ENCODE measurements at regions of chr1 and their contacts with region 1.

Region 1: GRCh38 chr1:37514350-37515184 is at the start of gene MEAF6:
- DNase-seq: peak; percentile 63 to 72
- ATAC-seq: peak; percentile 97 to 98
- H3K4me3 ChIP-seq: peak within 1 kb of the TSS; percentile 100
- H3K27ac ChIP-seq: peak within 1 kb of the TSS; percentile 98 to 99
- H3K4me1 ChIP-seq: peaks cover 6% of the 10 kb centered on the region; the same call in 1 of the 3 replicates
- CTCF ChIP-seq: peak; percentile 75
- EP300 ChIP-seq: no peak
- POLR2A ChIP-seq: peak; percentile 78
- RAD21 ChIP-seq: peak in 1 of 2 experiments; percentile 30; a peak in 1 of 5 replicates
- polyA plus RNA-seq, gene MEAF6: 45.4 and 47.2 TPM in 2 replicates

Region 2: DNA sequence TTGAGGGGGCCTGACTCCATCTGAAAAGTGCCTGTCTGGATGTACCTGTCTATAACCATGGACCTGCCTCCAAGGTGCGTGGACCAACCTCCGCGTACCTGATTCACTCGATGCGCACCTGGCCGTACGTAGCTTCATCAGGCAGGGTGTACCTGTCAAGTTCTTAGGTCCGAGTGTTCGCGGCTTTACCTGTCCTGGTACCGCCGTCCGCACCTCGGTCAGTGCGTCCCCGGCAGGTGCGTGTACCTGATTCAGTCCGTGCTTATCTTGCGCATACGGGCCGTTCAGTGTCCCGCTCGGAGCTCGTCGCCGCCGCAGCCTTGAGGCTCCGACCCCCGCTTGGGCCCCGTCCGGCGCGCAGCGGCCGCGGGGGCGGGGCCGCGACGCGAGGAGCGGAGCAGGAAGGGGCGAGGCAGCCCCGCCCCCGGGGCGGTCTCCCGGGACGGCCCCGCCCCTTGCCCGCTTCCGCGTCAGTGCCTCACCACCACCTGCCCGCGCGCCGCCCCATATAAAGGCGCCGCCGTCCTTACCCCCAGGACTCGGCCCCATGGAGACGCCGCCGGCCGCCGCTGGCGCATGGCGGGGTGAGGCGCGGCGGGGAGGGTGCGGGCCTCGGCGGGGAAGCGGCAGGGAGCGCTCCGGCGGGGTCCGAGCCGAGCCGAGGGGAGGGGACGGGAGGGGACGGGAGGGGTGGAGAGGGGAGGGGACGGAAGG is 40.4 kb before region 1 on chr1 and contains the start of gene ZC3H12A:
- CTCF ChIA-PET with region 1: interaction called, 19 read pairs
- POLR2A ChIA-PET with region 1: interaction called, 8 read pairs
- DNase-seq: peak; percentile 58 to 83
- ATAC-seq: peak; percentile 41 to 44
- H3K4me3 ChIP-seq: peak within 1 kb of the TSS; percentile 85
- H3K27ac ChIP-seq: peak within 1 kb of the TSS; percentile 88 to 100
- H3K4me1 ChIP-seq: peaks cover 47% of the 10 kb centered on the region
- CTCF ChIP-seq: no peak; the same call in 2 of the 3 replicates
- EP300 ChIP-seq: no peak
- POLR2A ChIP-seq: peak; percentile 91
- RAD21 ChIP-seq: no peak
- polyA plus RNA-seq, gene ZC3H12A: 23.1 and 23.5 TPM in 2 replicates

Region 3: GRCh38 chr1:37479255-37480124 is 35.1 kb before region 1 on chr1:
- CTCF ChIA-PET with region 1: interaction called, 19 read pairs
- POLR2A ChIA-PET with region 1: interaction called, 8 read pairs
- DNase-seq: peak; percentile 81 to 86
- ATAC-seq: peak; percentile 17 to 25
- H3K4me3 ChIP-seq: peak overlapping the region; percentile 85
- H3K27ac ChIP-seq: peak overlapping the region; percentile 88 to 100
- H3K4me1 ChIP-seq: peaks cover 58% of the 10 kb centered on the region
- CTCF ChIP-seq: no peak
- EP300 ChIP-seq: peak; percentile 79 to 86; a peak in 3 of 5 replicates
- POLR2A ChIP-seq: no peak
- RAD21 ChIP-seq: no peak; a peak in 1 of 5 replicates

Region 4: DNA sequence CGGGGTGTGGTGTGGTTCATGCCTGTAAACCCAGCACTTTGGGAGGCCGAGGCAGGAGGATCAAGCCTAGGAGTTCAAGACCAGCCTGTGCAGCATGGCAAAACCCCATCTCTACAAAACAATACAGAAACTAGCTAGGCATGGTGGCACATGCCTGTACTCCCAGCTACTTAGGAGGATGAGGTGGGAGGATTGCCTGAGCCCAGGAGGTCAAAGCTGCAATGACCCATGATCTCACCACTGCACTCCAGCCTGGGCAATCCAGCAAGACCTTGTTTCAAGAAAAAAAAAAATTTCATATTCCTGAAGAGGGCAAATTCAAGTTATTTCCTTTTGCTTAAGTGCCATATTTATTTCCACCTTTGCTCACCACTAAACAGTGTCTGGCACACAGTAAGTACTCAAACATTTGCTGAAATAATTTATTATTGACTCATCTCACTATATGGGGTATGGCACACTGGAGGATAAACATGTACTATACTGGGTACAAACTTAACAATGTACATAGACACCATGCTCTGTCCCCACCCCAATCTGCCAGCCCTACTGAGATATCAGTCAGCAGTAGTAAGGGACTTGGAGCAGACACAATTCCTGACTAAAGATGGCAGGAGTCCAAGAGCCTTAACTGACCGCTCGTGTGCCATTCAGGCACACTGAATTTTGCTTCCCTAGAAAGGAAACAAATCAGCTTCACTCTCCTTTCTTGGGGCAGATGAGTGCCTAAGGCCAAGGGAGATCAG is 15.5 kb before region 1 on chr1:
- CTCF ChIA-PET with region 1: interaction called, 21 read pairs
- POLR2A ChIA-PET with region 1: interaction called, 3 read pairs
- DNase-seq: peak in 1 of 2 experiments; percentile 66
- ATAC-seq: peak; percentile 59 to 93
- H3K4me3 ChIP-seq: no peak overlapping the region
- H3K27ac ChIP-seq: peak overlapping the region; percentile 68 to 80; a peak in 5 of 6 replicates
- H3K4me1 ChIP-seq: peaks cover 52% of the 10 kb centered on the region
- CTCF ChIP-seq: no peak
- EP300 ChIP-seq: no peak
- POLR2A ChIP-seq: no peak
- RAD21 ChIP-seq: no peak

Region 5: GRCh38 chr1:37533317-37534093 is 18.9 kb after region 1 on chr1:
- CTCF ChIA-PET with region 1: interaction called, 12 read pairs
- POLR2A ChIA-PET with region 1: no interaction called
- DNase-seq: no peak
- ATAC-seq: no peak; a peak in 2 of 6 replicates
- H3K4me3 ChIP-seq: no peak overlapping the region
- H3K27ac ChIP-seq: peak overlapping the region; percentile 74 to 76; a peak in 5 of 6 replicates
- H3K4me1 ChIP-seq: peaks cover 37% of the 10 kb centered on the region
- CTCF ChIP-seq: no peak
- EP300 ChIP-seq: no peak
- POLR2A ChIP-seq: no peak
- RAD21 ChIP-seq: no peak

Region 6: DNA sequence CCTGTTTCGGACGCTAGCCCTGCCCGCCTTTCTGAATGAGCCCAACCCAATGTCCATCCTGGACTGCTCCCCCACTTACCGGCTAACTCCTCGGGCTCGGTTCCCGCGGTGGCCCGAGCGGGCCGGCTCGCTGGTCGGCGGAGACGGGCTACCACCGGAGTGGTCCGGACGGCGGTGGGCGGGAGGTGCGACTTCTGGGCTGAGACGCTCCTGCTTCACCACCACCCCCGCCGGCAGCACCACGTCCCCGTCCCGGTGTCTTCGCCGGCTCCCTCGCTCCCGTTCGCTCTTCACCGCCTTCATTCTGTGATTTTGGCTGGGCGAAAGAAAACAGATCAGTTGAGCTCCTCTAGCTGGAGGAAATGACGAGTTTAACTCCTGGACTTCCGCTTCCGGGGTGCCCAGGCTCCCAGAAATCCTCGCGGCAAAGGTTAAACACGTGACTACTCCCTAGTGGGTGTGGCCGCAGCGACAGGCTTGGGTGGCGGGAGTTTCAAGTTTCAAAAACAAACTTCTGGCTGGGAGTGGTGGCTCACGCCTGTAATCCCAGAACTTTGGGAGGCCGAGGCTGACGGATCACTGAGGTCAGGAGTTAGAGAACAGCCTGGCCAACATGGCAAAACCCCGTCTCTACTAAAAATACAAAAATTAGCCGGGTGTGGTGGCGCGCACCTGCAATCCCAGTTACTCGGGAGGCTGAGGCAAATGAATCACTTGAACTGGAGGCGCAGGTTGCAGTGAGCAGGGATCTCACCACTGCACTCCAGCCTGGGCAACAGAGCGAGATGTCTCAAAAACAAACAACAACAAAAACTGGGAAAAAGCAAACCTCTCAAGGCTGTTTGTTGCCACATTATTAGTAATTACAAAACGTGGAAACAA is 39.6 kb after region 1 on chr1 and contains the start of gene SNIP1:
- CTCF ChIA-PET with region 1: interaction called, 11 read pairs
- POLR2A ChIA-PET with region 1: interaction called, 4 read pairs
- DNase-seq: peak; percentile 89 to 92
- ATAC-seq: peak; percentile 84 to 94
- H3K4me3 ChIP-seq: peak within 1 kb of the TSS; percentile 100
- H3K27ac ChIP-seq: peak within 1 kb of the TSS; percentile 87 to 91
- H3K4me1 ChIP-seq: peaks cover 16% of the 10 kb centered on the region; the same call in 2 of the 3 replicates
- CTCF ChIP-seq: no peak
- EP300 ChIP-seq: no peak
- POLR2A ChIP-seq: peak; percentile 12; the same call in 1 of the 2 replicates
- RAD21 ChIP-seq: no peak
- polyA plus RNA-seq, gene SNIP1: 7.8 and 9.0 TPM in 2 replicates

Measured in A549 (cell line).